ENCODE measurements at regions of chr21 and their contacts with region 1.

Region 1: GRCh38 chr21:41926117-41926806 is 27.6 kb downstream of the C2CD2 start:
- DNase-seq: peak in 8 of 9 donors; percentile 36 to 75 (median 66)
- ATAC-seq: peak; percentile 85
- H3K4me3 ChIP-seq: peak overlapping the region; percentile 78
- H3K4me3 Mint-ChIP-seq: peak overlapping the region; percentile 88 to 99 (median 95)
- H3K27ac ChIP-seq: peak overlapping the region; percentile 91
- H3K27ac Mint-ChIP-seq: peak overlapping the region; percentile 94 to 100 (median 99)
- H3K4me1 ChIP-seq: peaks cover 12 to 37% of the 10 kb centered on the region in 2 donors
- H3K4me1 Mint-ChIP-seq: peaks cover 45 to 69% (median 61%) of the 10 kb centered on the region in 7 donors
- H3K27me3 ChIP-seq: no peaks in the 10 kb centered on the region
- H3K27me3 Mint-ChIP-seq: no peaks in the 10 kb centered on the region

Region 2: DNA sequence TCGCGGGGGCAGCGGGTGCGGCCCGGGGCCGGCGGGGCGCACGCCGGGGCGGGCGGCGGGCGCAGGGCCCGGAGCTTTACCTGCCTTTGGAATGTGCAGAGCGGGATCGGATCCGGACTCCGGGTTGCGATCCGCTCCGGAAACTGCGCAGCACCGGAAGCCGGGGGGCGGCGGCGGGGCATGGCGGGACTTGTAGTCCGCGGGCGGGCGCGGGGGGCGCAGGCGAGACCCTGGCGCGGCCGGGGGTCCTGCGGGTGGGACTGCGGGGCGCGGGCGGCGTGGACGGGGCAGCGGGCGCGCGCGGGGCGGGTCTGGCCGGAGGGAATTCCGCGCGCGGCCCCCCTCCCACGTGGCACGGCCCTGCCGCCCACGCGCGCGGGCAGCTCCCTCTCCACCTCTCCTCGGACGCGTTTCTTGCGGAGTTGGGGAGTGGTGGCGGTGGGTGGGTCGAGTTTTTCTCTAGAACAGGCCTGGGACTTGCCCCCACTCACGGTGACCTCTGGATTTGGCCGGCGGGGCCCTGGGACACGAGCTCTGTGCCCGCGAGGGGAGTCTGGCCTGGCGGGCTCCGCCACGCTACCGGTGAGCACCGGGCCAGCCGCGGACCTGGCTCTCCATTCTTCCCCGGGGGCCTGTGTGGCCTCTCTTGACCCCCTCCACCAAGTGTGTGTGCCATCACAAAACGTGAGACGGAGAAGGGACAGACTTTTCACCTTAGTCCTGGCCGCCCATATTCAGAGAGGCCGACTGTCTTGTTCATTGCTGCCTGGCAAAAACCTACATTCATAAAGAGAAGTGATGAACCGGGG is 46.9 kb before region 1 on chr21 and contains the start of gene PRDM15:
- CTCF ChIA-PET with region 1: interaction called, 6 read pairs
- POLR2A ChIA-PET with region 1: interaction called, 12 read pairs
- intact Hi-C with region 1: loop called (anchors 1 kb)
- DNase-seq: peak; percentile 69 to 88 (median 77)
- ATAC-seq: peak; percentile 85
- H3K4me3 ChIP-seq: peak within 1 kb of the TSS; percentile 84
- H3K4me3 Mint-ChIP-seq: peak within 1 kb of the TSS; percentile 88 to 95 (median 92)
- H3K27ac ChIP-seq: peak within 1 kb of the TSS; percentile 85
- H3K27ac Mint-ChIP-seq: peak within 1 kb of the TSS; percentile 92 to 97 (median 95)
- H3K4me1 ChIP-seq: peaks cover 9 to 16% of the 10 kb centered on the region in 2 donors
- H3K4me1 Mint-ChIP-seq: peaks cover 20 to 35% (median 29%) of the 10 kb centered on the region in 7 donors
- H3K27me3 ChIP-seq: no peaks in the 10 kb centered on the region
- H3K27me3 Mint-ChIP-seq: no peaks in the 10 kb centered on the region
- total RNA-seq, gene PRDM15: 10.0 to 20.1 (median 15.9) TPM

Region 3: DNA sequence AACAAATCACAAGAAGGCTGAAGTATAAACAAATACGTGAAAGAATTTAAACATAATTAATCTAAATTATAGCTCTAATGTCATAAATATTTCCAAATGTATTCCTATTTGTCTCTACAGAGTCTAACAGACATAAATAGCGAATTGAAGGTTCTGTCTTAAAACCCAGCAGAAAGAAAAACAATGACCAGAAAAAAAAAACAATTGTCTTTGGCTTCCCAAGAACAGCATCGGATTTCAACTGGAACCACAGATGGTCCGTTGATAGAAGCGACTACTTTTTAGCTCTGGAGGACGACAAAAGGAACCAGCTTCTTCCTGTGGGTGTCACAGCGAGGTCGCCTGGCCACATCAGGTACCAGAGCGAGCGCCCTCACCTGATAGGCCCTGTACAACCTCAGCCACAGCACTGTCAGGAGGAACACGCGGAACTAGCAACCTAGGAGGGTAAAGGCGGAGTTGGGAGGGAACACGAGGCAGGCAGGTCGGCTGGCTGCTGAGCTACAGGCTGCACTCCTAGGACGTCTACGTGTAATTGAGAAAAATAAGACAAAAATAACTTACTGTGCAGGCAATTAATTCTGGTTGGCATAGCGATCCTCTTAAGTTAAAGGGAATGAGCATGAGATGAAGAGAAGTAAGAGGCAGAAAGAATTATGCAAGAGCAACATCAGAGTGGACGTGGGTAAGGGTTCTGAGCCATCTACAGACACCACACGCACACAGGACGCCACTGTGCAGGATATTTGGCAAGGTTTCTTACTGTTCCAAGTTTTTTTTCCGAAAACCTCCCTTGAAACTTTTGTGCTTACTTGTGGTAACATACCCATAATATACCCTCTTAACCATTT is 30.4 kb before region 1 on chr21:
- CTCF ChIA-PET with region 1: interaction called, 4 read pairs
- POLR2A ChIA-PET with region 1: interaction called, 9 read pairs
- intact Hi-C with region 1: loop called in 1 of 2 experiments (anchors 2 kb)
- DNase-seq: peak in 8 of 9 donors; percentile 18 to 72 (median 58)
- ATAC-seq: peak; percentile 94
- H3K4me3 ChIP-seq: no peak overlapping the region
- H3K4me3 Mint-ChIP-seq: peak overlapping the region in 8 of 10 donors; percentile 35 to 70 (median 51)
- H3K27ac ChIP-seq: no peak overlapping the region
- H3K27ac Mint-ChIP-seq: peak overlapping the region; percentile 34 to 91 (median 71)
- H3K4me1 ChIP-seq: peaks cover 4 to 16% of the 10 kb centered on the region in 2 donors
- H3K4me1 Mint-ChIP-seq: peaks cover 9 to 35% (median 21%) of the 10 kb centered on the region in 7 donors
- H3K27me3 ChIP-seq: no peaks in the 10 kb centered on the region
- H3K27me3 Mint-ChIP-seq: no peaks in the 10 kb centered on the region

Region 4: DNA sequence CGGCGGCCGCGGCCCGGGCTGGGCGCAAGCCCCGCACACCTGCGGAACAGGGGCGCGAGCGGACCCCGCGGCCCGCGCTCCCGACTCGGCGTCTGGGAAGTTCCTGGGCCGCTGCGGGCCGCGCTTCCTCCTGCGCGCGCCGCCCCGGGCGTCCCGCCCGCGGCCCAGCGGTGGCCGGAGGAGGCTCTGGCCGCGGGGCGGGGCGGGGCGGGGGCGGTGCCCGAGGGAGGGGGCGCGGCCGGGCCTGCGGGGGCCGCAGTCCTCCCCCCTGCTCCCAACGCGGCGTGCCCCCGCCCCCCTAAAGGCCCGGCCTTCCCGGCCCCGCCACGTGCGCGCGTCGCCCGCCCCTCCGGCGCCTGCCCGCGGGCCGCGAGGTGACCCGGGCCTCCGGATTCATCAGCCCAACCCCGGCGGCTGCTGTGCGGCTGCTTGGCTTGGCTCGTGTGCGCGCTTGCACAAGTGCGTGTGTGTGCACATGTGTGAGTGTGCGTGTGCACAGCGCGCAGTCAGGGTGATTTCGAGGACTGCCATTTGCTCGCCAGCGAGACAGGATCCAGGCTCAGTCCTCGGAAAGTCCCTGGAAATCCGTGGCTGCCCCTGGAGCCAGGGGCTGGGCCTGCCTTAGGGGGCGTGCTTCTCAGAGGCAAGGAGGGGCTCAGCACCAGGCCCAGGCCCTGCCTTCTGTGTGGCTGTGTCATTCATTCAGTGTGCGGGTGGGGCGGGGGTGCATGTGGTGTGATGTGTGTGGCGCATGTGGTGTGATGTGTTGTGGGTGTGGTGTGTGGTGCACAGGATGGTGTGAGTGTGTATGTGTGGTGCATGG is 27.8 kb after region 1 on chr21 and contains the start of gene C2CD2:
- CTCF ChIA-PET with region 1: no interaction called
- POLR2A ChIA-PET with region 1: no interaction called
- intact Hi-C with region 1: loop called in 1 of 2 experiments (anchors 2 kb)
- DNase-seq: peak in 2 of 9 donors; percentile 9 to 47
- ATAC-seq: peak; percentile 59
- H3K4me3 ChIP-seq: peak within 1 kb of the TSS; percentile 26
- H3K4me3 Mint-ChIP-seq: peak within 1 kb of the TSS; percentile 16 to 88 (median 69)
- H3K27ac ChIP-seq: no peak within 1 kb of the TSS
- H3K27ac Mint-ChIP-seq: peak within 1 kb of the TSS in 4 of 9 donors; percentile 7 to 41 (median 28)
- H3K4me1 ChIP-seq: peaks cover 0 to 6% of the 10 kb centered on the region in 2 donors
- H3K4me1 Mint-ChIP-seq: peaks cover 4 to 25% (median 9%) of the 10 kb centered on the region in 7 donors
- H3K27me3 ChIP-seq: no peaks in the 10 kb centered on the region
- H3K27me3 Mint-ChIP-seq: peaks cover 0 to 26% (median 7%) of the 10 kb centered on the region in 5 donors
- total RNA-seq, gene C2CD2: 7.1 to 14.8 (median 14.0) TPM

Region 5: GRCh38 chr21:42002421-42002958 is 76.2 kb after region 1 on chr21:
- CTCF ChIA-PET with region 1: no interaction called
- POLR2A ChIA-PET with region 1: interaction called, 3 read pairs
- intact Hi-C with region 1: loop called in 1 of 2 experiments (anchors 2 kb)
- DNase-seq: peak in 4 of 9 donors; percentile 30 to 73 (median 57)
- ATAC-seq: peak; percentile 66
- H3K4me3 ChIP-seq: no peak overlapping the region
- H3K4me3 Mint-ChIP-seq: peak overlapping the region; percentile 33 to 82 (median 68)
- H3K27ac ChIP-seq: no peak overlapping the region
- H3K27ac Mint-ChIP-seq: peak overlapping the region; percentile 19 to 91 (median 80)
- H3K4me1 ChIP-seq: peaks cover 6 to 14% of the 10 kb centered on the region in 2 donors
- H3K4me1 Mint-ChIP-seq: peaks cover 27 to 55% (median 42%) of the 10 kb centered on the region in 7 donors
- H3K27me3 ChIP-seq: no peaks in the 10 kb centered on the region
- H3K27me3 Mint-ChIP-seq: no peaks in the 10 kb centered on the region

Region 6: DNA sequence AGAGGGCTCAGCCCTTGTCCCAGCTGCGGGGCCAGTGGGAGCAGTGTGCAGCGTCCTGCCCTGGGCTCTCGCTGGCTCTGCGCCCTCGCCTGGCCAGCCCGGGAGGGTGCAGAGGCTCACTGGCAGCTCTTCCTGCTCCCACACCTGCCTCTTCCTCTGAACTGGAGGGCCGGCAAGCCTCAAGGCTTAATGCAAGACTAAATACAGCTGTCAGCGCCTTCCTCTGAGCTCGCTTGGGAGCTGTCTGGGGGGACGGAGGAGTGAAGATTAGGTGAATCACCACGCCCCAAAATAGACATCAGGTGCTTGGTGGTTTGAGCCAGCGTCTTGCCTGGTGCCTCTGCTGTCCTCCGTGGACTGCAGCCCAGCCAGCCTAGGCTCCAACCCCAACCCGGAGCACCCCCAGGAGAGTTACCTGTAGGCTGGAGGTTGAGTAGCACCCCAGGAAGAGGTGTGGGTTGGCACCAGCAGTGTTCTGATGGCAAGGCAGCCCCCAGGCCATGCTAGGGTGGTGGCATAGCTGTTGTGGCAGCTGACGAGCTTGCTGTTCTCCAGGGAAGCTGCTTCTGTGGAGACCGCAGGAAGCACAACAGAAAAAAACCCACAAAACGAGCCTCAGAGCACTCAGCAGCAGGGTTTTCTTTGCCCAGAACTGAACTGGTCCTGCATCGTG is 181.8 kb after region 1 on chr21:
- CTCF ChIA-PET with region 1: interaction called, 14 read pairs
- POLR2A ChIA-PET with region 1: interaction called, 5 read pairs
- intact Hi-C with region 1: loop called in 1 of 2 experiments (anchors 2 kb)
- DNase-seq: peak; percentile 46 to 82 (median 69)
- ATAC-seq: peak; percentile 97
- H3K4me3 ChIP-seq: peak overlapping the region; percentile 11
- H3K4me3 Mint-ChIP-seq: peak overlapping the region; percentile 34 to 84 (median 76)
- H3K27ac ChIP-seq: peak overlapping the region; percentile 38
- H3K27ac Mint-ChIP-seq: peak overlapping the region in 8 of 9 donors; percentile 11 to 82 (median 73)
- H3K4me1 ChIP-seq: peaks cover 0 to 15% of the 10 kb centered on the region in 2 donors
- H3K4me1 Mint-ChIP-seq: peaks cover 0 to 28% (median 10%) of the 10 kb centered on the region in 7 donors
- H3K27me3 ChIP-seq: no peaks in the 10 kb centered on the region
- H3K27me3 Mint-ChIP-seq: peaks cover 0 to 4% (median 0%) of the 10 kb centered on the region in 5 donors

Measured in naive thymus-derived CD4-positive, alpha-beta T cell (primary cell).